ENCODE measurements at regions of chr7 and their contacts with region 1.

Region 1: DNA sequence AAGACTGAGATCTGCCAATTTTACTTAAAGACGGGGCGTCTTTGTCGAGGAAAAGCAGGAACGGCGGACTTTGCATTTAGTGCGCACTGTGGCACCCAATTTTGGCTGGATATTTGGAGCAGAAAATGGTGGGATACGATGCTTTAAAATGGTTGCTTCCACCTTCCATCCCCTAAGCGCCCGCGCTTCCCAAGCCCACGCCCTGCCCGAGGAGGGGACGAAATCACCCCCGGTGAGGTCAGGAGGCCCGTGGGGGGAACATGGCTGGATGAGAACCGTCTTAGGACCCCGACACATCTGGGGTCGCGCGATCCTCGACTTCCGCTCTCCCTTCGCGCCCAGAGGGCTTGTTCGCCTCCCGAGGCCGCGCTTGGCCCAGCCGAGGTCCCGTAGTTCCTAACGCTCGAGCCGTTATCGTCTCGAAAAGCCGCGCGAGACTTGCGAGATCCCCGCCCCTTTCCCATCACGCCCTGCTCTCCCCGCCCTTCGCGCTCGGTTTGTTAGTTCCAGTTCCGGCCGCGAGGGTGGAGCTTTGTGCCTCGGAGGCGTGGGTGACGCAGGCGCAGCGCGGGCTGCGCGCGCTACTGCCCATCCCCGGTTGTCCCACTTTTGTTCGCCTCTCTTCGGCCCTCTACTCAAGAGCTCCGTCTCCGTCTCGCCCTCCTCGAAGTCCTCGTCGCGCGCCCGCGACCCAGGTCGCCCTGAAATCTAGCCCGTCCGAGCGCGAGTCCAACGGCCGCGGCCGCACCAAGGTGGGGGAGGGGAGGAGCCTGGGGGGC is at the start of gene SRRT:
- DNase-seq: peak; percentile 91 to 98
- H3K4me3 ChIP-seq: peak within 1 kb of the TSS; percentile 99
- H3K27ac ChIP-seq: peak within 1 kb of the TSS; percentile 86
- H3K4me1 ChIP-seq: peaks cover 19% of the 10 kb centered on the region
- H3K27me3 ChIP-seq: no peaks in the 10 kb centered on the region
- CTCF ChIP-seq: peak; percentile 57
- total RNA-seq, gene SRRT: 116 and 144 TPM in 2 replicates

Region 2: DNA sequence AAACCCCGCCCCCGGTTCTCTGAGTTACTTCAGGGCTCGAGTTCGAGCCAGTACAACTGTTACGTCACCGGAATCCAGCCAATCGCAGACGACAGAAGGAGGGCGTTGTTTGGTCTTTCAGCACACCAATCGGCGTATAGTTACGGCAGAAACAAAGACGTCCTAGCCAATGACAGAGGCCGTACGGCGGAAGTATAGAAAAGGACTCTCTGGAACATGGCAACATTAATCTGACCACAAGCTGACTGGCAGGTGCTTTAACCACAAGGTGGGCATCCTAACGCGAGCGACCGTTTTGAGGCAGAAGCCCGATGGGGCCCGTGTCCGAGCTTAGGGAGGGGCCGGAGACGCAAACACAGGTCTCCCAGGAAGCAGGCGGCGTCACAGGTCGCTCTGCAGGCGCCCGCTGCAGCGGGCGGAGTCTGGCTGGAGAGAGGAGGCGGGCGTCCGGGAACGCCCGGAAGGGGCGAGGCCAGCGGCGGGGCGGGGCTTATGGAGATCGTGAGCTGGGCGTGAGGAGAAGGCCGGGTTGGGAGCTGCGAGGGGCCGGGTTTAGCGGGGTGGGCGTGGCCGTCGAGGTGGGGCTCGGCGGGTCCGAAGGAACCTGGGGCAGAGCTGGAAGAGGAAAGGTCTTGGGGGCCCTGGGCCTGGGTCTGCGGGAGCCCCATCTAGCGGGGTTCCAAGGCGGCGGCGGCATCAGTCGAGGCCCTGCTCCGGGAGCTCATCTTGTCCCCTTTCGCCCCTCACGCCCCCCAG is 262.6 kb before region 1 on chr7 and contains the start of gene MOSPD3:
- CTCF ChIA-PET with region 1: no interaction called
- POLR2A ChIA-PET with region 1: interaction called, 18 read pairs
- intact Hi-C with region 1: no loop called
- DNase-seq: peak; percentile 98 to 99
- H3K4me3 ChIP-seq: peak within 1 kb of the TSS; percentile 74
- H3K27ac ChIP-seq: peak within 1 kb of the TSS; percentile 60
- H3K4me1 ChIP-seq: peaks cover 5% of the 10 kb centered on the region
- H3K27me3 ChIP-seq: no peaks in the 10 kb centered on the region
- CTCF ChIP-seq: no peak
- total RNA-seq, gene MOSPD3: 38.1 and 38.8 TPM in 2 replicates

Region 3: DNA sequence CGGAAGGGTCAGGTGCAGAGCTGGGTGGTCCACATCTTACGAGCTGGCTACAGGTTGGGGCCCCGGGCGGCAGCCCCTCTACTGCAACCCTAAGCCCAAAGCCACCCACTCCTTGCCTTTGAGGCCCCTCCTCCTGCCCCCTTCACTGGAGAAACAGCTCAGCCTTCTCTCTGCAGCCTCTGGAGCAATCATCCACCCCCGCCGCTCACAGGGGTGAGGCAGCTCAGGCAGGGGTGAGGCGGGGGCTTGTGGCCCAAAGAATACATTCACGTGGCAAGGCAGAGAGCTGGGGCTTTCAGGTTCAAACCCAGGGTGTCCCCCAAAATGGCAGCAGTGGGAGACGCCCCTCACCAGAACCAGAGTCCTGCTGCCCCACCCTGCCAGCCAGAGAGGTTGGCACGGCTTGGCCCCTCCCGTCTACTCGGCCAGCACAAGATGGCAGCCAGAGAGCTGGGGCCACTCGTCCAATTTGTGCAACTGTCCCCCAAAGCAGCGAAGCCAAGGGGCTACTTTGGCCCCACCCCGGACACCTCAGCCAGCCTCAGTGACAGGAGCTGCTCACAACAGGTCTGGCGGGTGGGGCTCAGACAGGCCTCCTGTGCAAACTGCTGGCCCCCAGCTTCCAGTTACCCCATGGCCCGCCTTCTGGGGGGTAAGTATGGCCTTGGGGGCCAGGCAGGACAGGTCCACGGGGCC is 194.0 kb before region 1 on chr7:
- CTCF ChIA-PET with region 1: interaction called, 12 read pairs
- POLR2A ChIA-PET with region 1: no interaction called
- intact Hi-C with region 1: no loop called
- DNase-seq: no peak
- H3K4me3 ChIP-seq: no peak overlapping the region
- H3K27ac ChIP-seq: no peak overlapping the region
- H3K4me1 ChIP-seq: no peaks in the 10 kb centered on the region; the same call in 1 of the 2 replicates
- H3K27me3 ChIP-seq: no peaks in the 10 kb centered on the region
- CTCF ChIP-seq: no peak

Region 4: GRCh38 chr7:100837099-100837836 is 37.5 kb before region 1 on chr7:
- CTCF ChIA-PET with region 1: no interaction called
- POLR2A ChIA-PET with region 1: interaction called, 10 read pairs
- intact Hi-C with region 1: no loop called
- DNase-seq: peak; percentile 46 to 91
- H3K4me3 ChIP-seq: peak overlapping the region; percentile 33; the same call in 1 of the 2 replicates
- H3K27ac ChIP-seq: no peak overlapping the region
- H3K4me1 ChIP-seq: no peaks in the 10 kb centered on the region
- H3K27me3 ChIP-seq: no peaks in the 10 kb centered on the region
- CTCF ChIP-seq: no peak

Region 5: DNA sequence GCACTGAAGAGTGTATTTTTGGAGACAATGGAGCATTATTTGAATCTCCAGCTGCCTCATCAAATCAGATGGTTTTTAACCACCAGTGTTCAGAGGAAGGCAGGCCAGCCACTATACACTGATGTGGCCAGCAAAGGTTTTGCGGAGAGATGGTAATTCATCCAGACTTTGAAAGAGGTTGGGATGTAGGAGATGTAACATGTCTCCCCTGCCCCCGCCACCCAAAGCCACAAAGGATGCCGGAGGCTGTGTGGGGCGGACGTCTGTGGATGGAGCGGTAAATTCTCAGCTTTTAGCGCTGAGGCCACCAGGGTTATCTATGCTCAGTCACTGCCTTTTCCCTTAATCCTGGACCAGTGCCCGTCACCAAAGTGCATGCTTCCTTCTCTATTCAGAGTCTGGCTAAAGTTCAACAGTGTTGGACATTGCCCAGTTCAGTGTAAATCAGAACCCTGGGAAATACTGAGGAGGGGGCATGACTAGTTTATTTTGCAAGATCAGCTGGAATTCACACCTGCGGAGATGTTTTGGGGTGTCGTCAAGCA is 11.3 kb before region 1 on chr7:
- CTCF ChIA-PET with region 1: no interaction called
- POLR2A ChIA-PET with region 1: no interaction called
- intact Hi-C with region 1: no loop called
- DNase-seq: no peak
- H3K4me3 ChIP-seq: no peak overlapping the region
- H3K27ac ChIP-seq: no peak overlapping the region
- H3K4me1 ChIP-seq: peaks cover 13% of the 10 kb centered on the region
- H3K27me3 ChIP-seq: no peaks in the 10 kb centered on the region
- CTCF ChIP-seq: no peak

Region 6: GRCh38 chr7:101201695-101202604 is 327.2 kb after region 1 on chr7:
- CTCF ChIA-PET with region 1: no interaction called
- POLR2A ChIA-PET with region 1: interaction called, 13 read pairs
- intact Hi-C with region 1: no loop called
- DNase-seq: no peak
- H3K4me3 ChIP-seq: no peak overlapping the region
- H3K27ac ChIP-seq: no peak overlapping the region
- H3K4me1 ChIP-seq: no peaks in the 10 kb centered on the region
- H3K27me3 ChIP-seq: no peaks in the 10 kb centered on the region
- CTCF ChIP-seq: no peak

Region 7: GRCh38 chr7:101235050-101235449 is 360.3 kb after region 1 on chr7:
- CTCF ChIA-PET with region 1: no interaction called
- POLR2A ChIA-PET with region 1: no interaction called
- intact Hi-C with region 1: no loop called
- DNase-seq: no peak
- H3K4me3 ChIP-seq: no peak overlapping the region
- H3K27ac ChIP-seq: no peak overlapping the region
- H3K4me1 ChIP-seq: peaks cover 5% of the 10 kb centered on the region
- H3K27me3 ChIP-seq: no peaks in the 10 kb centered on the region
- CTCF ChIP-seq: peak; percentile 25; the same call in 1 of the 2 replicates

Measured in PC-9 (cell line).